Activated B cell treated with CpG ODN at 0.5 μM for 24 hours (primary cell): ENCODE measurements at regions of chr10 and their contacts with region 1.

Region 1: DNA sequence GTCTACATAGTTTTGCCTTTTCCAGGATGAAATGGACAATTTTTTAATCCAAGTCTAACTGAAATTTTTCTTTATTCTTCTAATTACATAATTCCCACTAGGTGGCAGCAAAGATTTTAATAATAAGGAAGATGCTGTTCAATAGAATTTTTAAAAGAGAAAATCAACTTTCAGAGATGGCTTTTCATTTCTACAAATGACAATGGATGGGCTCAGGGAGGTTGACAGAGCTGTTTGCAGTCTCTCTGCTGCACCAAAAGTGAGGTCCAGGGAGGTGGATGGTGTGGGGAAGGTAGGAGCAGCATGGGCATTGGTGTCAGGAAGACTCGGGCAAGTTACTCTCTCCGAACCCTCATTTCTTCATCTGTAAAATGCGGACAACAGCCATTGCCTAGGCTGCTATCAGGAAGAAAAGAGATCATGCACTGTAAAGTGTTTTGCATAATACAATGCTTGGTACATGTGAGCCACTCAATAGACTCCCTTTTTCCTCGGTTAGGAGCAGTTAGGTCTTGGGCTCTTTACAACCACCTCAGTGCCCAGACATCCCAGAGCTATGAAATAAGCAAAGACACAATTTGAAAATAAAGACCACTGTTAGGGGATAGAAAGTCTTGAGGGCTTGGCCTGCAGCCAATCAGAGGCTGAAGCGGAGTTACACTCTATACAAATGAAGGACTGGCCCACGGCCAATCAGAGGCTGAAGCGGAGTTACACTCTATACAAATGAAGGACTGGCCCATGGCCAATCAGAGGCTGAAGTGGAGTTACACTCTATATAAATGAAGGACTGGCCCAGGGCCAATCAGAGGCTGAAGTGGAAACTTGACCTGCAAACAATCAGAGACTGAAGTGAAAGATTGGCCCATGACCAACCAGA is 107.1 kb downstream of the ABLIM1 start:
- DNase-seq: no peak
- ATAC-seq: no peak
- H3K4me3 Mint-ChIP-seq: no peak overlapping the region
- H3K27ac Mint-ChIP-seq: no peak overlapping the region
- H3K4me1 Mint-ChIP-seq: peaks cover 16% of the 10 kb centered on the region
- H3K27me3 Mint-ChIP-seq: no peaks in the 10 kb centered on the region
- CTCF ChIP-seq: no peak

Region 2: DNA sequence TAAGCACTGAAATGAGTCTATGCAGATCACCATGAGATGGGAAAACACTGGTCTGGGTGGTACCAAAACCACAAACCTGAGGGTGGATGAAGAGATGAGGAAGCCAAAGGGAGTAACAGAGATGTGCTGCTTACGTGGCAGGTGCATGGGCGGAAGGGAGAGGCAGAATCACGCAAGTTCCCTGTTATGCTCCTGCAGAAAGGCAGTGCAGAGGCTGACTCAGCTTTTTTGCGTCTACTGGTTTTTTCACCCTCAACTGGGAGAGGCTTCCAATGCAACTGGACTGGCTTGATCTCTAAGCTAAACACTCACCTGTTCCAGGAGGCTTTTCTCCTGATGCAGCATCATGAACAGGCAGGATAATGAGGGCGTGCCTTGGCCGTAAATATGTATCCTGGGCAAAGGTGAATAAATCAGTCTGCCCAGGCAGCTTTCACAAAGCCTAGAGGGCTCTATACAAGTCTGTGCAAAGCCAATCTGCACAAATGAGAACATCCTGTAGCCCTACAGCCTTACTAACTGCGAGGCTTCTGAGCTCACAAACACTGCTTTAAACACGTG is 51.3 kb before region 1 on chr10:
- CTCF ChIA-PET with region 1: interaction called, 18 read pairs
- POLR2A ChIA-PET with region 1: interaction called, 17 read pairs
- intact Hi-C with region 1: no loop called
- DNase-seq: peak; percentile 37
- ATAC-seq: peak; percentile 49
- H3K4me3 Mint-ChIP-seq: peak overlapping the region; percentile 67
- H3K27ac Mint-ChIP-seq: peak overlapping the region; percentile 96
- H3K4me1 Mint-ChIP-seq: peaks cover 83% of the 10 kb centered on the region
- H3K27me3 Mint-ChIP-seq: no peaks in the 10 kb centered on the region
- CTCF ChIP-seq: no peak

Region 3: GRCh38 chr10:114538181-114538906 is 12.7 kb before region 1 on chr10:
- CTCF ChIA-PET with region 1: no interaction called
- POLR2A ChIA-PET with region 1: no interaction called
- intact Hi-C with region 1: no loop called
- DNase-seq: peak; percentile 24
- ATAC-seq: peak; percentile 57
- H3K4me3 Mint-ChIP-seq: peak overlapping the region; percentile 48
- H3K27ac Mint-ChIP-seq: peak overlapping the region; percentile 24
- H3K4me1 Mint-ChIP-seq: peaks cover 38% of the 10 kb centered on the region
- H3K27me3 Mint-ChIP-seq: no peaks in the 10 kb centered on the region
- CTCF ChIP-seq: no peak

Region 4: GRCh38 chr10:114703377-114704107 is 152.5 kb after region 1 on chr10:
- CTCF ChIA-PET with region 1: no interaction called
- POLR2A ChIA-PET with region 1: no interaction called
- intact Hi-C with region 1: loop called (anchors 1 kb)
- DNase-seq: no peak
- ATAC-seq: peak; percentile 52
- H3K4me3 Mint-ChIP-seq: no peak overlapping the region
- H3K27ac Mint-ChIP-seq: no peak overlapping the region
- H3K4me1 Mint-ChIP-seq: no peaks in the 10 kb centered on the region
- H3K27me3 Mint-ChIP-seq: no peaks in the 10 kb centered on the region
- CTCF ChIP-seq: no peak

Region 5: GRCh38 chr10:114876602-114877300 is 325.8 kb after region 1 on chr10:
- CTCF ChIA-PET with region 1: no interaction called
- POLR2A ChIA-PET with region 1: no interaction called
- intact Hi-C with region 1: loop called (anchors 5 kb)
- DNase-seq: no peak
- ATAC-seq: peak; percentile 60
- H3K4me3 Mint-ChIP-seq: no peak overlapping the region
- H3K27ac Mint-ChIP-seq: no peak overlapping the region
- H3K4me1 Mint-ChIP-seq: peaks cover 13% of the 10 kb centered on the region
- H3K27me3 Mint-ChIP-seq: peaks cover 37% of the 10 kb centered on the region
- CTCF ChIP-seq: no peak

Region 6: DNA sequence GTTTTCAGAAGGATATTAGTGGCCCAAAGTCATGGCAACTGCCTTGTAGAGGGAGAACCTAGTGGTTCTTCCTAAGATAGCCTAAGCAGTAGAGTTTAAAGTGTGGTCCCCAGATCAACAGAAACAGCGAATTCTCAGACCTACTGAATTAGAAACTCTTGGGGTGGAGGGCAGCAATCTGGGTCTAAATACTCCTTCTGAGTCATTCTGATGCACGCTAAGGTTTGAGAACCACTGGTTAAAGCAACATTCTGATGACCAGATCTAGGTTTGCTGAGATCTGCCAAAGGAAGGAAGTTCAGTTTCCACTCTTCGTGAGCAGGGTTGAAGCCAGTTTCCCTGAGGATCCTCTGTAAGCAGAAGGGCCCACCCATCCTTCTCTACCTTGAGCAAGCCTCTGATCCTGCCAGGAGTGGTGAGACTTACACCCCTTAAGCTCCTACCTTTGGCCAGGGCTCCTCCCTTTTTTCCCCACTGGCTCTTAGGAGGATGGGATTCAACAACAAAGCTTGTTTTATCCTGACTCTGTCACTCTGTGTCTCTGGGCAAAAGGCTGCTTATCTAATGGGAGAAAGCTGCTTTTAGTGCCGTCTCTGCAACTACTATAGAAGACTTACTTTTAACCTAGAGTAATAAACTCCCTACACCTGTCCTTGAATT is 360.2 kb after region 1 on chr10:
- CTCF ChIA-PET with region 1: no interaction called
- POLR2A ChIA-PET with region 1: no interaction called
- intact Hi-C with region 1: no loop called
- DNase-seq: no peak
- ATAC-seq: no peak
- H3K4me3 Mint-ChIP-seq: no peak overlapping the region
- H3K27ac Mint-ChIP-seq: no peak overlapping the region
- H3K4me1 Mint-ChIP-seq: no peaks in the 10 kb centered on the region
- H3K27me3 Mint-ChIP-seq: no peaks in the 10 kb centered on the region
- CTCF ChIP-seq: no peak

Region 7: DNA sequence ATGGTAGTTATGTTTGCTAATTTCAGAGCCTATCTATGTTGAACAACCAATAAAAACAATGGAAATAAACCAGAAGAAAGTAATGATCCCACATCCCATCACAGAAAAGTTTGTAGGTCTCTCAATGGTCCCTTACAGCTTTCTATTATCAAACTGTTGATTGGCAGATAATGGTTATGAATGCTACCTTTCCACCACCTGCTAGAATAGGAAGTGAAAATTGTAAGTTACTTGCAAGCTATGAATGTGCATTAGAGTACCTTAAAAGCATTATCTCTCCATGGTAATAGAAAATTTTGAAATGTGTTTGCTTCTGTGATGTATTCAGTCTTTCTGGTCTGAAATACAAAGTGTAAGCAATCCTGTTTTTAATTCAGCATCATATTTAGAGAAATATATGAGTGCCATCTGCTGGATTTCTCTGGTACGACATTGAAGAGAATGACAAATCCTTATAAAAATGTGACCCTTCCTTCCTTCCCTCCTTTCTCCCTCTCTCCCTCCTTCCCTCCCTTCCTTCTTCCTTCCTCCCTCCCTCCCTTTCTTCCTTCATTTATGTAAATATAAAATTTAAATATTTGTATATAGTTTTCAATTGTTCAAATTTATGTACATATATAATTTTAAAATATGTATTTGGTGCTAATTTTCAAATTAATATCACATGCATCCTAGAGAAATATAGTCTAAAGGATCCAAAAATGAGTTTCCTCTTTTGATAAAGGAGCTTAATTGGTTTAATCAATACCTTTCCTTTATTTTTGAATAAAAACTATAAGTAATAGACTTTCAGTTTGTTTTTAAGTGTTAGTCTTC is 1835.2 kb after region 1 on chr10:
- CTCF ChIA-PET with region 1: no interaction called
- POLR2A ChIA-PET with region 1: no interaction called
- intact Hi-C with region 1: loop called (anchors 10 kb)
- DNase-seq: no peak
- ATAC-seq: no peak
- H3K4me3 Mint-ChIP-seq: no peak overlapping the region
- H3K27ac Mint-ChIP-seq: no peak overlapping the region
- H3K4me1 Mint-ChIP-seq: no peaks in the 10 kb centered on the region
- H3K27me3 Mint-ChIP-seq: no peaks in the 10 kb centered on the region
- CTCF ChIP-seq: no peak